Activated CD4-positive, alpha-beta memory T cell treated with anti-CD3 and anti-CD28 coated beads, Interleukin-2, amount 10 ng/mL, durations not matched to agents 7 days and 5 days (primary cell): ENCODE measurements at regions of chr7 and their contacts with region 1.

Region 1: GRCh38 chr7:30348083-30348560 is 63.7 kb downstream of the ZNRF2 start:
- DNase-seq: peak; percentile 57
- H3K4me3 Mint-ChIP-seq: peak overlapping the region; percentile 67
- H3K27ac Mint-ChIP-seq: peak overlapping the region; percentile 95
- H3K4me1 Mint-ChIP-seq: peaks cover 58% of the 10 kb centered on the region
- H3K27me3 Mint-ChIP-seq: no peaks in the 10 kb centered on the region

Region 2: DNA sequence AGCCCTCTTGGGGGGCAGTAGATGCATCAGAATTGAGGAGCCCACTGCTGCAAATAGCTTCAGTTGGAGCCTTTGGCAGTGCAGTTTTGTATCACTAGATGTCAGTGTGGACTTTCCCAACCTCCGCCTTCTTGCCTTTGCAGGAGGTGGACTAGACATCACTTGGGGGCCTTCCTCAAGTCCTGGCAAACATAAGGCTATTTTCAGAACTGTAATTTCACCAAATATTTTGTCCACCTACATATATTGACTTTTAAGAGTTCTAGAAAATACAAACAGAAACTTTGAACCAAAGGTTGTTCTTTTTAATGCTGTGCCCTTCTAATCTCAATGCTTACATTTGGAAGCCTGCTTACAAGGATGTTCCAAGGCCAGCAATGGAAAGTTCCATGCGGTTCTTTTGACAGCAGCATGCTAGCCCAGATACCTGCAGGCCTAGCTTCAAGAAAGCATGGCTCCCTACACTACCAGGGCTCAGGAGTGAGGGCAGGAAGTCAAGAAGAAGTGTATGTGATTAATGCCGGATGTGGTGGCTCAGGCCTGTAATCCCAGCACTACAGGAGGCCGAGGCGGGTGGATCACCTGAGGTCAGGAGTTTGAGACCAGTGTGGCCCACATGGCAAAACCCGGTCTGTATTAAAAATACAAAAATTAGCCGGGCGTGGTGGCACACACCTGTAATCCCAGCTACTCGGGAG is 71.8 kb before region 1 on chr7:
- CTCF ChIA-PET with region 1: interaction called, 13 read pairs
- POLR2A ChIA-PET with region 1: interaction called, 11 read pairs
- DNase-seq: peak; percentile 57
- H3K4me3 Mint-ChIP-seq: no peak overlapping the region
- H3K27ac Mint-ChIP-seq: no peak overlapping the region
- H3K4me1 Mint-ChIP-seq: peaks cover 7% of the 10 kb centered on the region
- H3K27me3 Mint-ChIP-seq: no peaks in the 10 kb centered on the region

Region 3: DNA sequence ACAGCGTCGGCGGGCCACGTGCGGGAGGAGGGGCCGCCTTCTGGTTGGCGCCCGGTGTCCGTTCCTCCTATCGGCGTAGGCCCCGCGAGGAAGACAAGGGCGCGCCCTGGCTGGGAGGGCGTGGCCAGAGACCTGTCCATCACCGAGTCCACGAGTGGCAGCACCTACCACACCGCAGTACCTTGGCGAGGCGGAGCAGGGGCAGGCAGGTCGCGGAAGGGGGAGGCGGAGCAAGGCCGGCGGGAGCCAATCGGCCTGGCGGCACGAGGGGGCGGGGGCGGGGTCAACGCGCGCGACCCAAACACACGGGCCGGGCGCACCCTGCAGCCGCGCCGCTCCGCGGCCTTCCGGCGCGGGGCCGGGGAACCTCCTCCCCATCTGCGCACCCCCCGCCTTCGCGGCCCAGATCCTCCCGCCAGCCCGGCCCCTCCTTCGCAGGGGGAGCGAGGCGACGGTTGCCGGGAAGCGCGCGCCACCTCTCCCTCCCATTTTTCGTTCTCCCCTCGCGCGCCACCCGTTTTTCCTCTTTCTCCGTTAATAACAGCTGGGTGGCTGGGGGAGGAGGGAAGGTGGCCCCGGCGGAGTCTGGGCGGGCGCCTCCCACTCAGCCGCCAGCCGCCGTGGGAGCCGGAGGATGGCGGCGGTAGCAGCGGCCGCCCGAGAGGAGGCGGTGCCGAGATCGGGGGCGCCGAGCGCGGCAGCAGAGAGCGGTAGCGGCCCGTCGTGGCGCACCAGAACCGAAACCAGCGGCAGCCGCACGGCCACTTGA is 63.6 kb before region 1 on chr7 and contains the start of gene ZNRF2:
- CTCF ChIA-PET with region 1: interaction called, 11 read pairs
- POLR2A ChIA-PET with region 1: interaction called, 35 read pairs
- DNase-seq: peak; percentile 99
- H3K4me3 Mint-ChIP-seq: peak within 1 kb of the TSS; percentile 75
- H3K27ac Mint-ChIP-seq: peak within 1 kb of the TSS; percentile 83
- H3K4me1 Mint-ChIP-seq: peaks cover 40% of the 10 kb centered on the region
- H3K27me3 Mint-ChIP-seq: no peaks in the 10 kb centered on the region
- total RNA-seq, gene ZNRF2: 17.9 to 18.5 TPM

Region 4: DNA sequence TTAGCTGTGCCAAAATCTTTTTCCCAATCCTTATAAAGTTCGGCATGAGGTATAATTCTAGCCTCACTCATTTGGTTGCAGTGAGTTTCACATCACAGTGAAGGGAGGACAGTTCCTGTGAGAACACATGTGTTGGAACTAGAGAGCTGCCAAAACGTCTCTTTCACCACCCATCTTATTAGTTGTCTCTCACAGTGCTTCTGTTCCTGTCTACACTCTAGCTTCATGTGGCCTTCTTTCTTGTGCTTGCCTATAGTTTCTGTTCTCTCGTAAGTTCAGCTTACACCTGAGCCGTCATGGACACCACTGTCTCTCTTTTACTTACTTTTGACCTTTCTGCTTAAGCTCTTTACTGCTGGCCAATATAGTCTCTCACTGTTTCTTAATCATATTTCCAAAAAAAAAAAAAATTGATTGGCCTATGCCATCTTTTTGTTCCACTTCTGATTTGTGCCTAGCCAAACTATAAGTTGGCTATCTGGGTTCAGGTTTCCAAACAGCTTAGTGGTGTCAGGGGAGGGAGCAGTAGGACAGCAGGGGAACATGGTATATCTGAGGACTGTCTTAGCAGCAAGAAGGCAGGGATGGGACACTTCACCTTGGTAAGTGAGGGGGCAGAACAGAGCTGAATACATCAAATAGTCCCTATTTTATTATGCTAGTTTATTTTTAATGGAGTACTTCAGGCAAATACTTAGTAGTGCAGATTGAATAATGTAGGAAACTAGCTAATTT is 25.7 kb before region 1 on chr7:
- CTCF ChIA-PET with region 1: interaction called, 7 read pairs
- POLR2A ChIA-PET with region 1: interaction called, 83 read pairs
- DNase-seq: peak; percentile 21
- H3K4me3 Mint-ChIP-seq: peak overlapping the region; percentile 73
- H3K27ac Mint-ChIP-seq: peak overlapping the region; percentile 96
- H3K4me1 Mint-ChIP-seq: peaks cover 59% of the 10 kb centered on the region
- H3K27me3 Mint-ChIP-seq: no peaks in the 10 kb centered on the region

Region 5: DNA sequence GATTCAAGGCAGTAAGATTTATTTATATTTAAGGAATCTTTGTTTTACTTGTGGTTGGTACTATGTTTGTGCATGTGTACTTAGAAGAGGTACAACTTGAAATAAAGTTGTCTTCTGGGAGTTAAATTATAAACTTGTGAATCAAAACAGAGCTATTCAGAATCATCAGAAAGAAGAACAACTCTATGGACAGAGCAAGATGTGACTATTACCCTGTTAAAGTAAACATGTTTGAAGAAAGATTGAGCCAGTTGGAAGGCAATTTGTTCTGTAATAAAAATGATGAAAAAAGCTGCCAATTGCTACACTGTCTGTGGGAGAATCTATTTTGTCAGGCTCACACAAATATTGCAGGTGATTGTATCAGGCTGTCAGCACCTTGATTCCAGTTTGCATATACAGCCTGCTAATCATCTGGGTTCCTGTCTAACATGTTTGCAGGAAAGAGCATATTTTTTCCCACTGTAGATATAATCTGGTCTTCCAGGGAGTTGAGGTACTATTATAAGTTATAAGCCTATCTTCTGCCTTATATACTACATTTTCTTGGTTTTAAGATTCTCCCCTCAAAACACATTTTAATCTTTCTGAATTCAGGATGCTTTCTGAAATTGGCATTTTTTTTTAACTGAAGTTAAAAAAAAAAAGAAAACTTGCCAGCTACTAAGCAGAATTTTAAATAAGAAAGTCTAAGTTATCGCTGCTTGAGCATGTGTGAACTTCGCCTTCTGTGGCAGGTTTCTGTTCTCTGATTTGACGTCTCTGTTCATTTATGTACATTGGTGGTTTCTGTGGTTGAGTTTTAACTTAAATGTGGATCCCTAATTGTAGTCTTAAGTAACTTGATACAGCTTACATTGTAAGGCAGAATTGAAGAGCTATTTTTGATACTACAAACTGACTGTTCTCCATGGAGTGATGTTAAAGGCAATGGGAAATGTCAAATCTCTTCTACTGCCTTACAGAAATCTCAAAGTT is 17.7 kb before region 1 on chr7:
- CTCF ChIA-PET with region 1: interaction called, 12 read pairs
- POLR2A ChIA-PET with region 1: interaction called, 26 read pairs
- DNase-seq: peak; percentile 41
- H3K4me3 Mint-ChIP-seq: peak overlapping the region; percentile 42
- H3K27ac Mint-ChIP-seq: peak overlapping the region; percentile 62
- H3K4me1 Mint-ChIP-seq: peaks cover 42% of the 10 kb centered on the region
- H3K27me3 Mint-ChIP-seq: no peaks in the 10 kb centered on the region

Region 6: GRCh38 chr7:30478349-30479201 is 130.5 kb after region 1 on chr7 and contains the start of gene NOD1:
- CTCF ChIA-PET with region 1: interaction called, 6 read pairs
- POLR2A ChIA-PET with region 1: interaction called, 17 read pairs
- DNase-seq: peak; percentile 75
- H3K4me3 Mint-ChIP-seq: peak within 1 kb of the TSS; percentile 93
- H3K27ac Mint-ChIP-seq: peak within 1 kb of the TSS; percentile 87
- H3K4me1 Mint-ChIP-seq: peaks cover 55% of the 10 kb centered on the region
- H3K27me3 Mint-ChIP-seq: no peaks in the 10 kb centered on the region
- total RNA-seq, gene NOD1: 19.6 to 22.6 TPM

Region 7: GRCh38 chr7:30531286-30531685 is 183.2 kb after region 1 on chr7:
- CTCF ChIA-PET with region 1: no interaction called
- POLR2A ChIA-PET with region 1: no interaction called
- DNase-seq: no peak
- H3K4me3 Mint-ChIP-seq: no peak overlapping the region
- H3K27ac Mint-ChIP-seq: no peak overlapping the region
- H3K4me1 Mint-ChIP-seq: no peaks in the 10 kb centered on the region
- H3K27me3 Mint-ChIP-seq: no peaks in the 10 kb centered on the region